ENCODE measurements at regions of chr3 and their contacts with region 1.

Region 1: GRCh38 chr3:108090701-108091451 is at the start of gene CD47:
- H3K4me3 Mint-ChIP-seq: peak within 1 kb of the TSS; percentile 97
- H3K27ac Mint-ChIP-seq: peak within 1 kb of the TSS; percentile 98
- H3K4me1 Mint-ChIP-seq: peaks cover 14% of the 10 kb centered on the region
- H3K27me3 Mint-ChIP-seq: peaks cover 9% of the 10 kb centered on the region

Region 2: GRCh38 chr3:107855708-107856107 is 235.2 kb before region 1 on chr3:
- intact Hi-C with region 1: no loop called
- H3K4me3 Mint-ChIP-seq: no peak overlapping the region
- H3K27ac Mint-ChIP-seq: no peak overlapping the region
- H3K4me1 Mint-ChIP-seq: no peaks in the 10 kb centered on the region
- H3K27me3 Mint-ChIP-seq: peaks cover 3% of the 10 kb centered on the region

Region 3: DNA sequence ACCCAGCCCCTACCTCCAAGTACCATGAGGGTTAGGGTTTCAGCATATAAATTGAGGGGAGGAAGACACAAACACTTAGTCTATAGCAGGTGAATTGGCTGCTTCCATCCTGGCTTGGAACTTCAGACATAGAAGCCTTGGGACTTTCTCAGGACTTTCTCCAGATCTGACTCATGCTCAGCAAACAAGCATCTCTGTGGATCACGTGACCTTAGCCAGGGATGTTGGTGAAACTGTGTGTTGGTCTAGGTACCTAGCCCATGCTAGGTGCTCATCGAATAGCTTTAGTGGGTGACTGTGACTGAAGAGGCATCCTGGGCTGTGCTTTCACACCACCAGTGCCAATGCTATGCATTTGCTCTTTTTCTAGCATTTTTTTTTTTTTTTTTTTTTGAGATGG is 59.0 kb before region 1 on chr3:
- intact Hi-C with region 1: loop called (anchors 2 kb)
- H3K4me3 Mint-ChIP-seq: no peak overlapping the region
- H3K27ac Mint-ChIP-seq: no peak overlapping the region
- H3K4me1 Mint-ChIP-seq: peaks cover 41% of the 10 kb centered on the region
- H3K27me3 Mint-ChIP-seq: no peaks in the 10 kb centered on the region

Region 4: DNA sequence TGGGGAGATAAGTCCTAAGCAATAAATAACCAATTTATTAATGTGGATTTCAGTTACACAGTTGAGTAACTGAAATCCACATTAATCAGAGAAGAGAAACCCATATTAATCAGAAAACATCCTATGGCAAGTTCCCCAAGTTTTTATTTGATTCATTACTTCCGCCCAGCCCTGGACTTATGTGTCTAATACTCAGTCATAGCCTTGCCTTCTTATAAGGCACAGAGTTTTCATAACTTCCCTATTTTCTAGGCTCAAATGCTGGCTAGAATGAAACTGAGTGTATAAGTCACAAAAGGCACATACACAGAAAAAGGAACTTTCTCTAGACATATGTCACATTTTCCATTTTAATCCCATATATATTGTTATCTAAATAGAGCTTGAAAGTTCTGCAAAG is 28.8 kb before region 1 on chr3:
- intact Hi-C with region 1: loop called (anchors 2 kb)
- H3K4me3 Mint-ChIP-seq: no peak overlapping the region
- H3K27ac Mint-ChIP-seq: peak overlapping the region; percentile 67
- H3K4me1 Mint-ChIP-seq: peaks cover 31% of the 10 kb centered on the region
- H3K27me3 Mint-ChIP-seq: no peaks in the 10 kb centered on the region

Region 5: GRCh38 chr3:108124337-108125152 is 33.7 kb after region 1 on chr3:
- intact Hi-C with region 1: loop called (anchors 5 kb)
- H3K4me3 Mint-ChIP-seq: peak overlapping the region; percentile 23
- H3K27ac Mint-ChIP-seq: peak overlapping the region; percentile 90
- H3K4me1 Mint-ChIP-seq: peaks cover 54% of the 10 kb centered on the region
- H3K27me3 Mint-ChIP-seq: no peaks in the 10 kb centered on the region

Region 6: DNA sequence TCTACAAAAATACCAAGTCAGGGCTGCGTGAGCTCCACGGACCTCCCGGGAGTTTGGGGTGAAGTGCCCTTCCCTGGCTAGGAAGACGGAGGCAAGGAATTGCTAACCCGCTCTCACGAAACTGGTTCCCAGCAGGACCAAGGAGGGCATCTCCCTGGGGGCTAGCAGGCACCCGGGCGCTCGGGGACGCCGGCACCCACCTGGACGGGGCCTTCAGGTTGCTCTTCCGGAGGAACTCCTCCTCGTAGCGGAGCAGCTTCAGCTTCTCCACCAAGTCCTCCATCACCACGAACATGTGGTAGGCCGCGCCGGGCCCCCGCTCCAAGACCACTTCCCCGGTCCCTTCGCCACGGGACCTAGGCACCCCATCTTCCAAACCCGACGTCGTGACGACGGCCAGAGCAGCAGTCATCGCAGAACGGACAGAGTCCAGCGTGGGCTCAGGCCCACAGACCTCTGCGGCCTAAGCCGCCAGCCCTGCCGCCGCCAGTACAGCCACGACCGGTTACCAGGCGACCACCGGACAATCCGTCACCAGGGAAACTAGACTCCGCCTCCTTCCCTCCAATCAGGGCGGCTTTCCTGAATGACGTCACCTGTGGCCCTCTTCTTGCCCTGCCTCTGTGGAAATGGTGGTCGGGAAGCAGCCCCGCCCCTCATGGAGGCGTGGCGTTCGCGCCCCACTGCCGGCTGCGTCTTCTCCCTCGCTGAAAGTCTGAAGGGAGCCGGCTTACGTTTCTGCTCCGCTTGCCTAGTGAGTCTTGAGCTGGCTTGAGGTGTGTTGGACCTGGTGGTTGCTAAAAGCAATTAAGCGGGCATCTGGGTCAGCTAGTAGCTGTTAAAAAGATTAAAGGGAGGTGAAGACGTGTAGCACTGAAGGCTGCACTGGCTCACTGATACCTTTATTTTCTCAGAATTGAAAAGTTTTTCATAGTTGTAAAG is 131.3 kb after region 1 on chr3 and contains the start of gene IFT57:
- intact Hi-C with region 1: loop called (anchors 2 kb)
- H3K4me3 Mint-ChIP-seq: peak within 1 kb of the TSS; percentile 86
- H3K27ac Mint-ChIP-seq: peak within 1 kb of the TSS; percentile 94
- H3K4me1 Mint-ChIP-seq: peaks cover 40% of the 10 kb centered on the region
- H3K27me3 Mint-ChIP-seq: no peaks in the 10 kb centered on the region

Region 7: GRCh38 chr3:108292905-108293328 is 202.0 kb after region 1 on chr3:
- intact Hi-C with region 1: loop called (anchors 5 kb)
- H3K4me3 Mint-ChIP-seq: peak overlapping the region; percentile 20
- H3K27ac Mint-ChIP-seq: peak overlapping the region; percentile 85
- H3K4me1 Mint-ChIP-seq: peaks cover 57% of the 10 kb centered on the region
- H3K27me3 Mint-ChIP-seq: no peaks in the 10 kb centered on the region

Region 8: GRCh38 chr3:108477511-108478147 is 386.8 kb after region 1 on chr3:
- intact Hi-C with region 1: loop called (anchors 10 kb)
- H3K4me3 Mint-ChIP-seq: no peak overlapping the region
- H3K27ac Mint-ChIP-seq: no peak overlapping the region
- H3K4me1 Mint-ChIP-seq: no peaks in the 10 kb centered on the region
- H3K27me3 Mint-ChIP-seq: no peaks in the 10 kb centered on the region